Activated CD4-positive, alpha-beta T cell treated with anti-CD3 and anti-CD28 coated beads, Interleukin-2, amount 10 ng/mL, durations not matched to agents 7 days and 5 days (primary cell): ENCODE measurements at regions of chr1 and their contacts with region 1.

Region 1: DNA sequence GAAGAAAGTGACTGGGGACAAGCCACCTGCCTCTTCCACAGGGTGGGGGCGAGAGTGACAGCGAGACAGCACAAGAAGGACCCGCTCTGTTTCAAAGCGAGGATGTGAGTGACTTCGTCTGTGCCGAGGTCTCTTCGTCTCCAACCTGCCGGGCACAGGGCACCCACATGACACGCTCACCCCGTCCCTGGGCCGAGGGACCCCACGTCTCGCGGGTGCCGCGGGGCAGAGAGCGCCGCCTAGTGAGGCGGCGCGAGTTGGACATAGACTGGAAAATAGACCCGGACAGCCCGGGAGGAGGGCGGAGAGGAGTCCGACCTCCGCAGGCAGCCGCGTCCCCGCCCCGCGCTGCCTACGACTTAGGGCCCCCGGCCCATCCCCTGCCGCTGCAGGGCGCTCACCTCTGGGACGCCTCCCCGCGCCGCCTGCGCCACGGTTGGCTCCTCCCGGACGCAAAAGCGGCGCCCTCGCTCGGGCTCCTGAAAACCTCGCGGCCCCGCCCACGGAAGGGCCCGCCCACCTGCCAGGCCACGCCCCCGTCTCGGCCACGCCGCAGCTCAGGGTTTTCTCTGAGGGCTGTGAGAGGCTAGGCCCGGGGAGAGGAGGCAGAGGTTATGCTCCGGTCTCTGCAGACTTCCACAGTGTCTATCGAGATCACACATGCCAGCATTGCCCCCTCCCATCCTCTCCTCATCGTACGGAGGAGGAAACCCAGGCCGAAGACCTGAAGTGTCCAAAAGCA is at the start of gene TLR5:
- DNase-seq: peak; percentile 87
- H3K4me3 Mint-ChIP-seq: peak within 1 kb of the TSS; percentile 64
- H3K27ac Mint-ChIP-seq: peak within 1 kb of the TSS; percentile 86
- H3K4me1 Mint-ChIP-seq: peaks cover 15% of the 10 kb centered on the region
- H3K27me3 Mint-ChIP-seq: peaks cover 9% of the 10 kb centered on the region
- total RNA-seq, gene TLR5: 0.58 to 1.0 TPM

Region 2: GRCh38 chr1:223123011-223123610 is 19.9 kb before region 1 on chr1:
- CTCF ChIA-PET with region 1: interaction called, 13 read pairs
- POLR2A ChIA-PET with region 1: no interaction called
- DNase-seq: no peak
- H3K4me3 Mint-ChIP-seq: no peak overlapping the region
- H3K27ac Mint-ChIP-seq: no peak overlapping the region
- H3K4me1 Mint-ChIP-seq: peaks cover 11% of the 10 kb centered on the region
- H3K27me3 Mint-ChIP-seq: no peaks in the 10 kb centered on the region